Naive thymus-derived CD4-positive, alpha-beta T cell (primary cell): ENCODE measurements at regions of chr6 and their contacts with region 1.

Region 1: GRCh38 chr6:43174263-43175112 is 3.4 kb downstream of the SRF start:
- DNase-seq: peak; percentile 66 to 92 (median 88)
- ATAC-seq: peak; percentile 77
- H3K4me3 ChIP-seq: peak overlapping the region; percentile 72
- H3K4me3 Mint-ChIP-seq: peak overlapping the region; percentile 85 to 99 (median 96)
- H3K27ac ChIP-seq: peak overlapping the region; percentile 73
- H3K27ac Mint-ChIP-seq: peak overlapping the region; percentile 90 to 98 (median 94)
- H3K4me1 ChIP-seq: peaks cover 26 to 29% of the 10 kb centered on the region in 2 donors
- H3K4me1 Mint-ChIP-seq: peaks cover 35 to 49% (median 40%) of the 10 kb centered on the region in 7 donors
- H3K27me3 ChIP-seq: no peaks in the 10 kb centered on the region
- H3K27me3 Mint-ChIP-seq: peaks cover 0 to 2% (median 0%) of the 10 kb centered on the region in 5 donors

Region 2: DNA sequence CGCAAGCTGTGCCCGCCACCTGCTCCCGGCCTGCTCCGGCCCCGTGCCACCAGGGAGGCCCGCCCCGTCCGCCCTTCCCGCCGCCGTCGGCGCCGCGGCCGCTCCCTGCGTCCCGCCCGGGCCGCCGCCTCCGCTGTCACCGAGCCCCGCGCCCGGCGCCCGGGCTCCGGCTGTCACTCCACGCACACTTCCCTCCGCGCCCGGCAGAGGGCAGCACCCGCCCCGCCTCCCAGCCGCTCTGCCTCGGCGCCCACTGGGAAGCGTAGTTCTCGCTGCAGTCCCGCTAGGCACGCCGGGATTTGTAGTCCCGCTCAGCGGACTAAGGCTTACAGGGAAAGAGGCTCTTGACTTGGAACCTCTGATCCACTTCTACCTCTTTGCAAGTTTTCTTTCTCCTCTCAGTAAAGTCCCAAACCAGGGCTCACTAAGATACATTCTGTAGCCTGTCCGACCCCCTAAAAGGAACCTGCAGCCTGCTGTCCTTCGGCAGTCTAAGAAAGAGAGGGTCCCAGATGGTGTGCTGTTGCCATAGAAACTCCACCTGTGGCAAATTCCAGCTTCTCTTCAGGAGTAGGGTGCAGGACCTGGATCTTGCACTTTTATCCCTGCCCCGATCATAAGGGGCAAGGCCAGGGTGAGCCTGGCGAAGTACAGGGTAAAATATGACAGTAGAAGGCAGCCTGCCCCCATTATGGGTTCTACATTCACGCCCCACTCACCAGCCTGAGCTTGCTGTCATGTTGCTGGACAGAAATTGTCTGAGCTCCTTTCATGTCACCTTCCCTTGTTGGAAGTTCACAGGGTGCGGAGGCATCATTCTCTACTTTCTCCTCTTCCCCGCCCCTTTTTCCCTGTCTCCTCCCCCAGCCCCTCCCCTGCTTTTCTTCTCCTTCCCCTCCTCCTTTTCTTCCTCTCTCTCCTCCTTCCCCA is 1438.8 kb before region 1 on chr6 and contains the start of gene TFEB:
- CTCF ChIA-PET with region 1: no interaction called
- POLR2A ChIA-PET with region 1: no interaction called
- intact Hi-C with region 1: loop called in 1 of 2 experiments (anchors 2 kb)
- DNase-seq: peak; percentile 88 to 98 (median 93)
- ATAC-seq: peak; percentile 87
- H3K4me3 ChIP-seq: peak within 1 kb of the TSS; percentile 57
- H3K4me3 Mint-ChIP-seq: peak within 1 kb of the TSS; percentile 66 to 89 (median 80)
- H3K27ac ChIP-seq: peak within 1 kb of the TSS; percentile 80
- H3K27ac Mint-ChIP-seq: peak within 1 kb of the TSS in 8 of 9 donors; percentile 34 to 84 (median 62)
- H3K4me1 ChIP-seq: peaks cover 32 to 37% of the 10 kb centered on the region in 2 donors
- H3K4me1 Mint-ChIP-seq: peaks cover 13 to 32% (median 24%) of the 10 kb centered on the region in 7 donors
- H3K27me3 ChIP-seq: no peaks in the 10 kb centered on the region
- H3K27me3 Mint-ChIP-seq: no peaks in the 10 kb centered on the region
- total RNA-seq, gene TFEB: 7.4 to 39.9 (median 11.8) TPM

Region 3: GRCh38 chr6:42563697-42564505 is 610.6 kb before region 1 on chr6 and contains the start of gene UBR2:
- CTCF ChIA-PET with region 1: no interaction called
- POLR2A ChIA-PET with region 1: no interaction called
- intact Hi-C with region 1: loop called (anchors 1 to 5 kb)
- DNase-seq: peak; percentile 67 to 97 (median 93)
- ATAC-seq: peak; percentile 99
- H3K4me3 ChIP-seq: peak within 1 kb of the TSS; percentile 92
- H3K4me3 Mint-ChIP-seq: peak within 1 kb of the TSS; percentile 94 to 100 (median 96)
- H3K27ac ChIP-seq: peak within 1 kb of the TSS; percentile 95
- H3K27ac Mint-ChIP-seq: peak within 1 kb of the TSS; percentile 89 to 98 (median 93)
- H3K4me1 ChIP-seq: peaks cover 7 to 12% of the 10 kb centered on the region in 2 donors
- H3K4me1 Mint-ChIP-seq: peaks cover 17 to 43% (median 29%) of the 10 kb centered on the region in 7 donors
- H3K27me3 ChIP-seq: no peaks in the 10 kb centered on the region
- H3K27me3 Mint-ChIP-seq: peaks cover 0 to 7% (median 0%) of the 10 kb centered on the region in 5 donors
- total RNA-seq, gene UBR2: 35.6 to 45.5 (median 38.9) TPM

Region 4: GRCh38 chr6:42984001-42984923 is 190.2 kb before region 1 on chr6 and contains the start of gene PPP2R5D:
- CTCF ChIA-PET with region 1: no interaction called
- POLR2A ChIA-PET with region 1: interaction called, 4 read pairs
- intact Hi-C with region 1: loop called (anchors 1 kb)
- DNase-seq: peak; percentile 81 to 98 (median 97)
- ATAC-seq: peak; percentile 97
- H3K4me3 ChIP-seq: peak within 1 kb of the TSS; percentile 64
- H3K4me3 Mint-ChIP-seq: peak within 1 kb of the TSS; percentile 87 to 99 (median 94)
- H3K27ac ChIP-seq: peak within 1 kb of the TSS; percentile 95
- H3K27ac Mint-ChIP-seq: peak within 1 kb of the TSS; percentile 89 to 99 (median 95)
- H3K4me1 ChIP-seq: peaks cover 28 to 40% of the 10 kb centered on the region in 2 donors
- H3K4me1 Mint-ChIP-seq: peaks cover 46 to 71% (median 68%) of the 10 kb centered on the region in 7 donors
- H3K27me3 ChIP-seq: no peaks in the 10 kb centered on the region
- H3K27me3 Mint-ChIP-seq: no peaks in the 10 kb centered on the region
- total RNA-seq, gene PPP2R5D: 19.7 to 60.4 (median 28.2) TPM

Region 5: GRCh38 chr6:43228951-43229802 is 54.7 kb after region 1 on chr6 and contains the start of gene DNPH1:
- CTCF ChIA-PET with region 1: interaction called, 4 read pairs
- POLR2A ChIA-PET with region 1: interaction called, 9 read pairs
- intact Hi-C with region 1: loop called (anchors 1 kb)
- DNase-seq: peak; percentile 65 to 91 (median 81)
- ATAC-seq: peak; percentile 84
- H3K4me3 ChIP-seq: peak within 1 kb of the TSS; percentile 53
- H3K4me3 Mint-ChIP-seq: peak within 1 kb of the TSS; percentile 87 to 95 (median 91)
- H3K27ac ChIP-seq: peak within 1 kb of the TSS; percentile 88
- H3K27ac Mint-ChIP-seq: peak within 1 kb of the TSS; percentile 92 to 98 (median 95)
- H3K4me1 ChIP-seq: peaks cover 5 to 24% of the 10 kb centered on the region in 2 donors
- H3K4me1 Mint-ChIP-seq: peaks cover 28 to 48% (median 40%) of the 10 kb centered on the region in 7 donors
- H3K27me3 ChIP-seq: no peaks in the 10 kb centered on the region
- H3K27me3 Mint-ChIP-seq: peaks cover 0 to 16% (median 0%) of the 10 kb centered on the region in 5 donors
- total RNA-seq, gene DNPH1: 25.4 to 65.7 (median 33.9) TPM

Region 6: GRCh38 chr6:43427406-43428111 is 253.1 kb after region 1 on chr6 and contains the start of gene ABCC10:
- CTCF ChIA-PET with region 1: no interaction called
- POLR2A ChIA-PET with region 1: no interaction called
- intact Hi-C with region 1: loop called (anchors 1 kb)
- DNase-seq: peak; percentile 89 to 98 (median 95)
- ATAC-seq: peak; percentile 97
- H3K4me3 ChIP-seq: peak within 1 kb of the TSS; percentile 77
- H3K4me3 Mint-ChIP-seq: peak within 1 kb of the TSS; percentile 89 to 98 (median 94)
- H3K27ac ChIP-seq: peak within 1 kb of the TSS; percentile 95
- H3K27ac Mint-ChIP-seq: peak within 1 kb of the TSS; percentile 93 to 100 (median 98)
- H3K4me1 ChIP-seq: peaks cover 11 to 12% of the 10 kb centered on the region in 2 donors
- H3K4me1 Mint-ChIP-seq: peaks cover 15 to 36% (median 27%) of the 10 kb centered on the region in 7 donors
- H3K27me3 ChIP-seq: no peaks in the 10 kb centered on the region
- H3K27me3 Mint-ChIP-seq: peaks cover 0 to under 1% (median 0%) of the 10 kb centered on the region in 5 donors
- total RNA-seq, gene ABCC10: 56.2 to 74.6 (median 60.4) TPM

Region 7: DNA sequence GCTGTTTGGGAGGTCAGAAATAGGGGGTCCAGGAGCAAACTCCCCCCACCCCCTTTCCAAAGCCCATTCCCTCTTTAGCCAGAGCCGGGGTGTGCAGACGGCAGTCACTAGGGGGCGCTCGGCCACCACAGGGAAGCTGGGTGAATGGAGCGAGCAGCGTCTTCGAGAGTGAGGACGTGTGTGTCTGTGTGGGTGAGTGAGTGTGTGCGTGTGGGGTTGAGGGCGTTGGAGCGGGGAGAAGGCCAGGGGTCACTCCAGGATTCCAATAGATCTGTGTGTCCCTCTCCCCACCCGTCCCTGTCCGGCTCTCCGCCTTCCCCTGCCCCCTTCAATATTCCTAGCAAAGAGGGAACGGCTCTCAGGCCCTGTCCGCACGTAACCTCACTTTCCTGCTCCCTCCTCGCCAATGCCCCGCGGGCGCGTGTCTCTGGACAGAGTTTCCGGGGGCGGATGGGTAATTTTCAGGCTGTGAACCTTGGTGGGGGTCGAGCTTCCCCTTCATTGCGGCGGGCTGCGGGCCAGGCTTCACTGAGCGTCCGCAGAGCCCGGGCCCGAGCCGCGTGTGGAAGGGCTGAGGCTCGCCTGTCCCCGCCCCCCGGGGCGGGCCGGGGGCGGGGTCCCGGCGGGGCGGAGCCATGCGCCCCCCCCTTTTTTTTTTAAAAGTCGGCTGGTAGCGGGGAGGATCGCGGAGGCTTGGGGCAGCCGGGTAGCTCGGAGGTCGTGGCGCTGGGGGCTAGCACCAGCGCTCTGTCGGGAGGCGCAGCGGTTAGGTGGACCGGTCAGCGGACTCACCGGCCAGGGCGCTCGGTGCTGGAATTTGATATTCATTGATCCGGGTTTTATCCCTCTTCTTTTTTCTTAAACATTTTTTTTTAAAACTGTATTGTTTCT is 595.3 kb after region 1 on chr6 and contains the start of gene VEGFA:
- CTCF ChIA-PET with region 1: no interaction called
- POLR2A ChIA-PET with region 1: no interaction called
- intact Hi-C with region 1: loop called in 1 of 2 experiments (anchors 5 kb)
- DNase-seq: peak; percentile 79 to 93 (median 86)
- ATAC-seq: peak; percentile 91
- H3K4me3 ChIP-seq: peak within 1 kb of the TSS; percentile 73
- H3K4me3 Mint-ChIP-seq: peak within 1 kb of the TSS; percentile 88 to 99 (median 94)
- H3K27ac ChIP-seq: peak within 1 kb of the TSS; percentile 45
- H3K27ac Mint-ChIP-seq: peak within 1 kb of the TSS in 8 of 9 donors; percentile 70 to 85 (median 84)
- H3K4me1 ChIP-seq: peaks cover 3 to 4% of the 10 kb centered on the region in 2 donors
- H3K4me1 Mint-ChIP-seq: peaks cover 8 to 34% (median 16%) of the 10 kb centered on the region in 7 donors
- H3K27me3 ChIP-seq: peaks cover 6 to 8% of the 10 kb centered on the region in 2 donors
- H3K27me3 Mint-ChIP-seq: peaks cover 7 to 21% (median 16%) of the 10 kb centered on the region in 5 donors
- total RNA-seq, gene VEGFA: 0.60 to 72.1 (median 19.4) TPM